WTC11 (cell line): ENCODE measurements at regions of chr5 and their contacts with region 1.

Region 1: DNA sequence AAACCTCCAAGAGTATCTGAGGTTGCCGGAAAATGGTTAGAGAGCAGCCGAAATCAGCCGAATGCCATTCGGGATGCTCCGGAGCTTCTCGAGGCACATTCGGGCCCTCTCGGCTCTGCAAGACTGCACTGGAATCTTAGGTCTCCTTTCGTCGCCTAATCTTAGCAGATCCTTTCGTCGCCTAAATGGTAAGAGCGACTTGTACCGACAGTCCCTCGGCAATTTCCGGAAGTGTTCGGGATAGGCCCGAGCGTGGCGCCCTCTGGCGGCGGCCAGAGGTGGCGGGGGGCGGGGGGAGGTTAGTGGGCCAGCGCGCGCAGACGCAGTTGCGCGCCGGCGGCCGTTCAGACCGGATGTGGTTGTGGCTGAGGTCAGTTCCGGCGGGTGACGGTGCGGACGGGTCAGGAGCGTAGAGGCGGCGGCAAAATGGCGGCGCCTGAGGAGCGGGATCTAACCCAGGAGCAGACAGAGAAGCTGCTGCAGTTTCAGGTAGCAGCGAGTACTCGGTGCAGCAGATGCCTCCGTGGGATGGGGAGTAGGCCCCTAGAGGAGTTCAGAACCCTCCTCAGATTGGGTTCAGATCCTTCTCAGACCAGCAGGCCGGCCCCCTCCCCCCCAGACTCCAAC is at the start of gene FAF2:
- DNase-seq: peak; percentile 97
- ATAC-seq: peak; percentile 98
- H3K4me3 Mint-ChIP-seq: peak within 1 kb of the TSS; percentile 94
- H3K27ac Mint-ChIP-seq: peak within 1 kb of the TSS; percentile 100
- H3K4me1 Mint-ChIP-seq: peaks cover 16% of the 10 kb centered on the region
- H3K27me3 Mint-ChIP-seq: no peaks in the 10 kb centered on the region; the same call in 1 of the 2 replicates
- CTCF ChIP-seq: peak; percentile 88
- total RNA-seq, gene FAF2: 31.9 to 32.9 TPM (median 32.1 TPM) in 3 replicates

Region 2: DNA sequence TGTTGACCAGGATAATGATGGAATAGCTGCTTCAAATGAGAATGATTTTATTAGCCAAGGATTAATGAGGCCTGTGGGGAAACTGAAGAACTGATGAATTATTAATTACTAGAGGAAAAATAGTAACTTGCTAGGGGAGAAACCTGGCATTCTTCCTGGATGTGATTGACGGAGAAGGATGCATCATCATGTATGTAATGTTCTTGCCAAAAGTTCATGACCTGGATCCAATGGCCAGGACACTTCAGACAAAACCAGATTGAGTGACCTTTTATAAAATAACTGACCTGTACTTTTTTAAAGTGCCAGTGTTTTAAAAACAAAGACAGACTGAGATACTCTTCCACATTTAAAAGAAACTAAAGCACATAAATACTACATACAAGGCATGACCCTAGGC is 110.2 kb before region 1 on chr5:
- CTCF ChIA-PET with region 1: no interaction called
- POLR2A ChIA-PET with region 1: no interaction called
- DNase-seq: no peak
- ATAC-seq: no peak
- H3K4me3 Mint-ChIP-seq: no peak overlapping the region
- H3K27ac Mint-ChIP-seq: no peak overlapping the region
- H3K4me1 Mint-ChIP-seq: no peaks in the 10 kb centered on the region
- H3K27me3 Mint-ChIP-seq: no peaks in the 10 kb centered on the region
- CTCF ChIP-seq: no peak

Region 3: GRCh38 chr5:176388444-176389134 is 59.5 kb before region 1 on chr5 and contains the starts of genes HIGD2A and NOP16:
- CTCF ChIA-PET with region 1: interaction called, 12 read pairs
- POLR2A ChIA-PET with region 1: no interaction called
- DNase-seq: peak; percentile 99
- ATAC-seq: peak; percentile 92
- H3K4me3 Mint-ChIP-seq: peak within 1 kb of the TSS; percentile 99
- H3K27ac Mint-ChIP-seq: peak within 1 kb of the TSS; percentile 100
- H3K4me1 Mint-ChIP-seq: peaks cover 19% of the 10 kb centered on the region
- H3K27me3 Mint-ChIP-seq: no peaks in the 10 kb centered on the region; the same call in 1 of the 2 replicates
- CTCF ChIP-seq: no peak
- total RNA-seq, gene HIGD2A: 98.2 to 112 TPM (median 108 TPM) in 3 replicates
- total RNA-seq, gene NOP16: 51.7 to 57.7 TPM (median 52.1 TPM) in 3 replicates

Region 4: GRCh38 chr5:176415952-176416924 is 31.9 kb before region 1 on chr5 and contains the start of gene CLTB:
- CTCF ChIA-PET with region 1: interaction called, 45 read pairs
- POLR2A ChIA-PET with region 1: interaction called, 6 read pairs
- DNase-seq: peak; percentile 90
- ATAC-seq: peak; percentile 97
- H3K4me3 Mint-ChIP-seq: peak within 1 kb of the TSS; percentile 58
- H3K27ac Mint-ChIP-seq: no peak within 1 kb of the TSS
- H3K4me1 Mint-ChIP-seq: peaks cover 6% of the 10 kb centered on the region; the same call in 1 of the 2 replicates
- H3K27me3 Mint-ChIP-seq: peaks cover 39% of the 10 kb centered on the region
- CTCF ChIP-seq: no peak
- total RNA-seq, gene CLTB: 28.6 to 33.8 TPM (median 30.3 TPM) in 3 replicates

Region 5: DNA sequence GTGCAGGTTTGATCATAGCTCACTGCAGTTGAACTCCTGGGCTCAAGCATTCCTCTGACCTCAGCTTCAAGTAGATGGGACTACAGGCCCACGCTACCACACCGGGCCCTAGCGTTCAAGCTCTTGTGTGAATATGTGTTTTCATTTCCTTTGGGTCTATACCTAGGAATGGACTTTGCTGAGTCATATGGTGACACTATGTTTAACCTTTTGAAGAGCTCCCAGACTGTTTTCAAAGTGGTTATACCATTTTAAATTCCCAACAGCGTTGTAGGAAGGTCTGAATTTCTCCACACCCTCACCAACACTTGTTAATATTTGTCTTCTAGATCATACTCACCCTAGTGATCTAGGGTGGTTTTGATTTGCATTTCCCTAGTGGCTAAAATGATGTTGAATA is 33.6 kb after region 1 on chr5:
- CTCF ChIA-PET with region 1: interaction called, 13 read pairs
- POLR2A ChIA-PET with region 1: no interaction called
- DNase-seq: no peak
- ATAC-seq: no peak
- H3K4me3 Mint-ChIP-seq: no peak overlapping the region
- H3K27ac Mint-ChIP-seq: no peak overlapping the region
- H3K4me1 Mint-ChIP-seq: no peaks in the 10 kb centered on the region
- H3K27me3 Mint-ChIP-seq: no peaks in the 10 kb centered on the region
- CTCF ChIP-seq: no peak

Region 6: GRCh38 chr5:176543428-176544173 is 95.5 kb after region 1 on chr5:
- CTCF ChIA-PET with region 1: interaction called, 16 read pairs
- POLR2A ChIA-PET with region 1: interaction called, 4 read pairs
- DNase-seq: peak; percentile 76
- ATAC-seq: peak; percentile 58
- H3K4me3 Mint-ChIP-seq: peak overlapping the region; percentile 91
- H3K27ac Mint-ChIP-seq: peak overlapping the region; percentile 97
- H3K4me1 Mint-ChIP-seq: peaks cover 48% of the 10 kb centered on the region
- H3K27me3 Mint-ChIP-seq: no peaks in the 10 kb centered on the region
- CTCF ChIP-seq: no peak

Region 7: GRCh38 chr5:176629853-176630712 is 182.0 kb after region 1 on chr5 and contains the starts of genes EIF4E1B and SNCB:
- CTCF ChIA-PET with region 1: interaction called, 10 read pairs
- POLR2A ChIA-PET with region 1: no interaction called
- DNase-seq: peak; percentile 72
- ATAC-seq: peak; percentile 63
- H3K4me3 Mint-ChIP-seq: peak within 1 kb of the TSS; percentile 76
- H3K27ac Mint-ChIP-seq: no peak within 1 kb of the TSS
- H3K4me1 Mint-ChIP-seq: peaks cover 39% of the 10 kb centered on the region
- H3K27me3 Mint-ChIP-seq: peaks cover 54% of the 10 kb centered on the region
- CTCF ChIP-seq: no peak
- total RNA-seq, gene EIF4E1B: 0.74 to 1.3 TPM (median 1.1 TPM) in 3 replicates
- total RNA-seq, gene SNCB: 6.8 to 13.4 TPM (median 9.6 TPM) in 3 replicates